Activated CD4-positive, alpha-beta memory T cell treated with anti-CD3 and anti-CD28 coated beads, Interleukin-2, amount 10 ng/mL, durations not matched to agents 7 days and 5 days (primary cell): ENCODE measurements at regions of chr12 and their contacts with region 1.

Region 1: DNA sequence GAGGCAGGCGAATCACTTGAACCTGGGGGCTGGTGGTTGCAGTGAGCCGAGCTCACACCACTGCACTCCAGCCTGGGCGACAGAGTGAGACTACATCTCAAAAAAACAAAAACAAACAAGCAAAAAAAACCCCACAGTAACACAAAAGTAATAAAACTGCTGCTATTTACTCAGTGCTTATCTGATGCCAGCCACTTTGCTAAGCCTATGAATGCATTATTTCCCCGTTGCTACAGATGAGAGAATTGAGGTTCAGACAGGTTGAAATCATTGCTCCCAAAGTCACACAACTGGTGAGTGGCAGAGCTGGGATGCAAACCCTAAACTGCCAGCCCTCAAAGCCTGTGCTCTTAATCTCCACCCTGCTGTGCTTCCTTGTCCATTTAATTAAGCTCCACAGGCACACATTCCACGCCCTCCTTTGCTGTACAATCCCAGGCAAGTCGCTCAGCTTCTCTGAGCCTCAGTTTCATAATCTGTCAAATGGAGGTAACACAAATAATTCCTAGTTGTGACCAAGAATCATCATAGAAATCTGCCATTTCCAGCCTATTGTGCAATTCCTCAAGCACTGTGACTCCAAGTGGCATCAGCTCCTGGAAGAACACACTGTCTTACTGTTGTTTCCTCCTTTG is 5.7 kb upstream of the OAS3 start:
- DNase-seq: no peak
- H3K4me3 Mint-ChIP-seq: no peak overlapping the region
- H3K27ac Mint-ChIP-seq: no peak overlapping the region
- H3K4me1 Mint-ChIP-seq: peaks cover 20% of the 10 kb centered on the region
- H3K27me3 Mint-ChIP-seq: no peaks in the 10 kb centered on the region

Region 2: DNA sequence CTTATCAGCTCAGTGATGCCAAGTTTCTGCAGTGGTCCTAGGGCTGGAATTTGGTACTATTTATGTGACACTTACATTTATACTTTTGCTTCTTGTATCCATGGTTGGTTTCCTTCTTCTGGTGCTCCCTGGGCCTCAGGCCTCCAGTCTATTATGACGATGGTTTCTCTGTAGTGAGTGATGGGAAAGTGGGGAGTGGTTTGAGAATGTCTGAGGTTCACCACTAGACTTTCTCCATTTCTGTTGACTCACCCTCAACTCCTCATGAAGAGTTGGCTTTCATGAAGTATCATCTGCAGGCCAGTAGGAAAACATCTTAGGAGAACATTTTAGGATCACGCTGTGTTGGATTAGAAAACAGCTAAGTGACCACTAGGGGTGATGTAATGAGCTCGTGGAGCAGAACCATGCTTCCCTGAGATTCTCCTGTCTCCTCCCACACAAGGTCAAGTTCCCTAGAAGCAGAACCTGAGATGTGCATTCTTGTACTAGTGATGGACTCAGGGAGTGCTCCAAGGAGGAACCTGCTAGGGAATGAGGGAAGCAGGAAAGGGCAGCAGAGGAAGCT is 108.9 kb before region 1 on chr12:
- CTCF ChIA-PET with region 1: no interaction called
- POLR2A ChIA-PET with region 1: no interaction called
- DNase-seq: no peak
- H3K4me3 Mint-ChIP-seq: no peak overlapping the region
- H3K27ac Mint-ChIP-seq: no peak overlapping the region
- H3K4me1 Mint-ChIP-seq: no peaks in the 10 kb centered on the region
- H3K27me3 Mint-ChIP-seq: peaks cover 23% of the 10 kb centered on the region

Region 3: DNA sequence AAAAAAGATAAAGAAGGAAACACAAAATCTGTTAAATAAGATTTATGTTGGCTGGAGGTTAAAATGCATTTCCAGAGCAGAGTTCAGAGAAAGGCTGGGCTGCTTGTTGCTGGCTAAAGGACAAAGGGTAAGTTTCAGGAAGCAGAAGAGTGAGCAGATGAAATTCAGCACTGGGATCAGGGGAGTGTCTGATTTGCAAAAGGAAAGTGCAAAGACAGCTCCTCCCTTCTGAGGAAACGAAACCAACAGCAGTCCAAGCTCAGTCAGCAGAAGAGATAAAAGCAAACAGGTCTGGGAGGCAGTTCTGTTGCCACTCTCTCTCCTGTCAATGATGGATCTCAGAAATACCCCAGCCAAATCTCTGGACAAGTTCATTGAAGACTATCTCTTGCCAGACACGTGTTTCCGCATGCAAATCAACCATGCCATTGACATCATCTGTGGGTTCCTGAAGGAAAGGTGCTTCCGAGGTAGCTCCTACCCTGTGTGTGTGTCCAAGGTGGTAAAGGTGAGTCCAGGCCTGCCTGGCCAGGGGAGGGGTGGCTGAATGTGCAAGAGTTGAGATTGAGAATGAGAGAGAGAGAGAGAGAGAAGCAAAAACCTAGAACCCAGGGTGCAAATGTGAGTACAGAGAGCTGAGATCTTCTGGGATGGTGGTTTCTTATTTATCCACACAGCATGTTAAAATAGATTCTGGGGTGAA is 25.7 kb before region 1 on chr12 and contains the start of gene OAS1:
- CTCF ChIA-PET with region 1: interaction called, 13 read pairs
- POLR2A ChIA-PET with region 1: interaction called, 41 read pairs
- DNase-seq: peak; percentile 69
- H3K4me3 Mint-ChIP-seq: peak within 1 kb of the TSS; percentile 100
- H3K27ac Mint-ChIP-seq: peak within 1 kb of the TSS; percentile 99
- H3K4me1 Mint-ChIP-seq: peaks cover 78% of the 10 kb centered on the region
- H3K27me3 Mint-ChIP-seq: no peaks in the 10 kb centered on the region
- total RNA-seq, gene OAS1: 246 to 248 TPM

Region 4: GRCh38 chr12:112919121-112919520 is 13.5 kb before region 1 on chr12:
- CTCF ChIA-PET with region 1: no interaction called
- POLR2A ChIA-PET with region 1: no interaction called
- DNase-seq: no peak
- H3K4me3 Mint-ChIP-seq: no peak overlapping the region
- H3K27ac Mint-ChIP-seq: no peak overlapping the region
- H3K4me1 Mint-ChIP-seq: peaks cover 21% of the 10 kb centered on the region
- H3K27me3 Mint-ChIP-seq: no peaks in the 10 kb centered on the region